ENCODE measurements at regions of chr12 and their contacts with region 1.

Region 1: GRCh38 chr12:55829967-55830600 is 697 bp upstream of the DNAJC14 start:
- DNase-seq: peak; percentile 68 to 70 (median 69)
- ATAC-seq: peak; percentile 39
- H3K4me3 ChIP-seq: peak overlapping the region; percentile 69 to 72
- H3K27ac ChIP-seq: peak overlapping the region; percentile 81 to 89 (median 88)
- H3K4me1 ChIP-seq: peaks cover 58% of the 10 kb centered on the region
- H3K27me3 ChIP-seq: no peaks in the 10 kb centered on the region
- CTCF ChIP-seq: no peak
- POLR2A ChIP-seq: no peak

Region 2: GRCh38 chr12:55899082-55899481 is 69.0 kb after region 1 on chr12:
- intact Hi-C with region 1: no loop called
- DNase-seq: no peak
- ATAC-seq: no peak
- H3K4me3 ChIP-seq: no peak overlapping the region
- H3K27ac ChIP-seq: no peak overlapping the region
- H3K4me1 ChIP-seq: no peaks in the 10 kb centered on the region
- H3K27me3 ChIP-seq: no peaks in the 10 kb centered on the region
- CTCF ChIP-seq: no peak
- POLR2A ChIP-seq: no peak

Region 3: DNA sequence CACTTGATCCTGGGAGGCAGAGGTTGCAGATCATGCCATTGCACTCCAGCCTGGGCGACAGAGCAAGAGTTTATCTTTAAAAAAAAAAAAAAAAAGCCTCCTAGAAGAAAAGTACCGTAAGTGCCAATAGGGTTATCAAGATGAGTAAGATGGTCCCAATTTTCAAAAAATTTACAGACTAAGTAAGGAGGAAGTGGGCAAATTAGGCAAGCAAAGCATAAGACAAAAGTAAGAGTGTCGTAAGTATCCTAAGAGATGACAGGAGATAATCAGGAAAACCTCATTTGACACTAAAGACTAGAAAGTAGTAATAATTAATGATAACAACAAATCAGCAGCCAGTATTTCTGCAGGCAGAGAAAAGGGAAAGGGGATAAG is 85.4 kb after region 1 on chr12:
- intact Hi-C with region 1: loop called (anchors 10 kb)
- DNase-seq: no peak
- ATAC-seq: no peak
- H3K4me3 ChIP-seq: no peak overlapping the region
- H3K27ac ChIP-seq: peak overlapping the region in 1 of 4 donors; percentile 55
- H3K4me1 ChIP-seq: peaks cover 51% of the 10 kb centered on the region
- H3K27me3 ChIP-seq: no peaks in the 10 kb centered on the region
- CTCF ChIP-seq: no peak
- POLR2A ChIP-seq: no peak

Measured in body of pancreas (tissue), 4 donors.